ENCODE measurements at regions of chr17 and their contacts with region 1.

Region 1: GRCh38 chr17:78176548-78177025 is 8.2 kb downstream of the SYNGR2 start:
- DNase-seq: peak; percentile 59 to 88 (median 75)
- ATAC-seq: peak; percentile 86
- H3K4me3 ChIP-seq: no peak overlapping the region
- H3K4me3 Mint-ChIP-seq: no peak overlapping the region
- H3K27ac ChIP-seq: no peak overlapping the region
- H3K27ac Mint-ChIP-seq: no peak overlapping the region
- H3K4me1 ChIP-seq: peaks cover 53% of the 10 kb centered on the region
- H3K4me1 Mint-ChIP-seq: peaks cover 45% of the 10 kb centered on the region
- H3K27me3 ChIP-seq: no peaks in the 10 kb centered on the region
- H3K27me3 Mint-ChIP-seq: no peaks in the 10 kb centered on the region
- CTCF ChIP-seq: peak; percentile 87

Region 2: GRCh38 chr17:78019367-78019975 is 157.1 kb before region 1 on chr17:
- CTCF ChIA-PET with region 1: no interaction called
- POLR2A ChIA-PET with region 1: no interaction called
- intact Hi-C with region 1: loop called in 1 of 2 experiments (anchors 1 kb)
- DNase-seq: peak in 3 of 14 experiments; percentile 51 to 57 (median 55)
- ATAC-seq: no peak
- H3K4me3 ChIP-seq: no peak overlapping the region
- H3K4me3 Mint-ChIP-seq: no peak overlapping the region
- H3K27ac ChIP-seq: no peak overlapping the region
- H3K27ac Mint-ChIP-seq: no peak overlapping the region
- H3K4me1 ChIP-seq: peaks cover 15% of the 10 kb centered on the region
- H3K4me1 Mint-ChIP-seq: peaks cover 25% of the 10 kb centered on the region
- H3K27me3 ChIP-seq: no peaks in the 10 kb centered on the region
- H3K27me3 Mint-ChIP-seq: no peaks in the 10 kb centered on the region
- CTCF ChIP-seq: peak; percentile 72

Region 3: DNA sequence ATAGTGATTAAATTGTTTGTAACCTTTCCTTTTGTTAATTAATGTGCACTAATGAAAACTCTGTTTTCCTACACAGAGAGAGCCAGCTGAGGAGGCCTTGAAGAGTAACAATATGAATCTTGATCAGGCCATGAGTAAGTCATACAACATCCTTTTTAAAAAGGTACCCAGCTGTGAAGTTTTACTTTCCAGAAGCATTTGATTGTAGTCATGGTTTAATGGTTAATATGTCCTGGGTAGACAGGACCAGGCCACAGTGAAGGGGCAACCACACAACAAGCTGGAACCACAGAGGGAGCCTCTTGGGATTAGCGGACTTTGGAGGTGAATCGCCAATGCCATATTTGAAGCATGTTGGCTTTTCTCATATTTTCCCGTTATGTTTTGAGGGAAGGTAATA is 103.6 kb before region 1 on chr17:
- CTCF ChIA-PET with region 1: no interaction called
- POLR2A ChIA-PET with region 1: no interaction called
- intact Hi-C with region 1: no loop called
- DNase-seq: no peak
- ATAC-seq: no peak
- H3K4me3 ChIP-seq: no peak overlapping the region
- H3K4me3 Mint-ChIP-seq: no peak overlapping the region
- H3K27ac ChIP-seq: no peak overlapping the region
- H3K27ac Mint-ChIP-seq: no peak overlapping the region
- H3K4me1 ChIP-seq: no peaks in the 10 kb centered on the region
- H3K4me1 Mint-ChIP-seq: no peaks in the 10 kb centered on the region
- H3K27me3 ChIP-seq: no peaks in the 10 kb centered on the region
- H3K27me3 Mint-ChIP-seq: no peaks in the 10 kb centered on the region
- CTCF ChIP-seq: no peak

Region 4: GRCh38 chr17:78082988-78083387 is 93.6 kb before region 1 on chr17:
- CTCF ChIA-PET with region 1: interaction called, 11 read pairs
- POLR2A ChIA-PET with region 1: interaction called, 8 read pairs
- intact Hi-C with region 1: loop called (anchors 1 kb)
- DNase-seq: no peak
- ATAC-seq: no peak
- H3K4me3 ChIP-seq: no peak overlapping the region
- H3K4me3 Mint-ChIP-seq: no peak overlapping the region
- H3K27ac ChIP-seq: no peak overlapping the region
- H3K27ac Mint-ChIP-seq: no peak overlapping the region
- H3K4me1 ChIP-seq: no peaks in the 10 kb centered on the region
- H3K4me1 Mint-ChIP-seq: no peaks in the 10 kb centered on the region
- H3K27me3 ChIP-seq: no peaks in the 10 kb centered on the region
- H3K27me3 Mint-ChIP-seq: no peaks in the 10 kb centered on the region
- CTCF ChIP-seq: no peak

Region 5: GRCh38 chr17:78112518-78113226 is 63.9 kb before region 1 on chr17:
- CTCF ChIA-PET with region 1: interaction called, 14 read pairs
- POLR2A ChIA-PET with region 1: interaction called, 19 read pairs
- intact Hi-C with region 1: loop called (anchors 1 kb)
- DNase-seq: peak; percentile 55 to 87 (median 77)
- ATAC-seq: peak; percentile 73
- H3K4me3 ChIP-seq: no peak overlapping the region
- H3K4me3 Mint-ChIP-seq: no peak overlapping the region
- H3K27ac ChIP-seq: peak overlapping the region; percentile 7 to 46
- H3K27ac Mint-ChIP-seq: peak overlapping the region; percentile 84
- H3K4me1 ChIP-seq: peaks cover 72% of the 10 kb centered on the region
- H3K4me1 Mint-ChIP-seq: peaks cover 36% of the 10 kb centered on the region
- H3K27me3 ChIP-seq: no peaks in the 10 kb centered on the region
- H3K27me3 Mint-ChIP-seq: no peaks in the 10 kb centered on the region
- CTCF ChIP-seq: peak; percentile 100

Region 6: GRCh38 chr17:78128551-78129350 is 47.8 kb before region 1 on chr17 and contains the start of gene TMC6:
- CTCF ChIA-PET with region 1: interaction called, 49 read pairs
- POLR2A ChIA-PET with region 1: interaction called, 16 read pairs
- intact Hi-C with region 1: loop called in 1 of 2 experiments (anchors 5 kb)
- DNase-seq: peak; percentile 58 to 89 (median 75)
- ATAC-seq: peak; percentile 43
- H3K4me3 ChIP-seq: peak within 1 kb of the TSS; percentile 94
- H3K4me3 Mint-ChIP-seq: peak within 1 kb of the TSS; percentile 100
- H3K27ac ChIP-seq: peak within 1 kb of the TSS; percentile 75 to 92
- H3K27ac Mint-ChIP-seq: peak within 1 kb of the TSS; percentile 96
- H3K4me1 ChIP-seq: peaks cover 76% of the 10 kb centered on the region
- H3K4me1 Mint-ChIP-seq: peaks cover 56% of the 10 kb centered on the region
- H3K27me3 ChIP-seq: no peaks in the 10 kb centered on the region
- H3K27me3 Mint-ChIP-seq: no peaks in the 10 kb centered on the region
- CTCF ChIP-seq: no peak
- total RNA-seq, gene TMC6: 645 to 659 TPM

Region 7: DNA sequence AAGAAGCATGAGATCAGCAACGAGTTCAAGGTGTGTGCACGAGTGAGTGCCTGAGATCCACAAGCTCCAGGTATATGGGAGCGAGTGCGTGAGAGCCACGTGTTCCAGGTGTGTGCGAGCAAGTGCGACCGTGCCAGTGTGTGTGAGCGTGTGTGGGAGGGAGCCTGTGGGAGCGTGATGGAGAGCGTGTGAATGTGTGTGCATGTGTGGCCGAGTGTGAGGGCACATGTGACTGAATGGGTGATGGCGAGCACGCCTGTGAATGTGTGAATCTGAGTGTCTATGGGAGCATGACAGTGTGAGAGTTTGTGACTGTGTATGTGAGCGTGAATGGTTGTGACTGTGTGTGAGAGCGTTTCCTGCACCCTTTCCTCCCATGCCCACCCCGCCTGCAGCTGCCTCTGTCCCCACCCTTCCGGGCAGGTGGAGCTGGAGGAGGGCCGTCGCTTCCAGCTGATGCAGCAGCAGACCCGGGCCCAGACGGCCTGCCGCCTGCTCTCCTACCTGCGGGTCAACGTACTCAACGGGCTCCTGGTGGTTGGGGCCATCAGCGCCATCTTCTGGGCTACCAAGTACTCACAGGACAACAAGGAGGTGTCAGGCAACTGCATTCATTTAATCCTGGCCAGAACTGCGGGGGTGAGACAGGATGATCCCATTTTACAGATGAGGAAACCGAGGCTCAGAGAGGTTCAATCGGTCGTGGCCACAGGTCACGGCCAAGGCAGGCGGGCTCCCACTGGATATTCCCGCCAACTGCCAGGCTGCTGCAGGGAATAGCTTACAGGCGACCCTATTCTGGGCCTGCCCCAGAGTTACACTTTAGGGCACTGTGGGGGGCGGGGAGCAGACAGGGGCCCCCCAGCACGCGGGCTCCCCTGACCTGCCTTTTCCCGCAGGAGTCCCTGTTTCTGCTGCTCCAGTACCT is 42.4 kb before region 1 on chr17:
- CTCF ChIA-PET with region 1: interaction called, 49 read pairs
- POLR2A ChIA-PET with region 1: interaction called, 32 read pairs
- intact Hi-C with region 1: loop called (anchors 2 to 5 kb)
- DNase-seq: peak; percentile 71 to 93 (median 78)
- ATAC-seq: peak; percentile 34
- H3K4me3 ChIP-seq: peak overlapping the region; percentile 94
- H3K4me3 Mint-ChIP-seq: peak overlapping the region; percentile 88
- H3K27ac ChIP-seq: peak overlapping the region; percentile 7 to 92
- H3K27ac Mint-ChIP-seq: peak overlapping the region; percentile 81
- H3K4me1 ChIP-seq: peaks cover 90% of the 10 kb centered on the region
- H3K4me1 Mint-ChIP-seq: peaks cover 80% of the 10 kb centered on the region
- H3K27me3 ChIP-seq: no peaks in the 10 kb centered on the region
- H3K27me3 Mint-ChIP-seq: no peaks in the 10 kb centered on the region
- CTCF ChIP-seq: peak; percentile 75

Region 8: DNA sequence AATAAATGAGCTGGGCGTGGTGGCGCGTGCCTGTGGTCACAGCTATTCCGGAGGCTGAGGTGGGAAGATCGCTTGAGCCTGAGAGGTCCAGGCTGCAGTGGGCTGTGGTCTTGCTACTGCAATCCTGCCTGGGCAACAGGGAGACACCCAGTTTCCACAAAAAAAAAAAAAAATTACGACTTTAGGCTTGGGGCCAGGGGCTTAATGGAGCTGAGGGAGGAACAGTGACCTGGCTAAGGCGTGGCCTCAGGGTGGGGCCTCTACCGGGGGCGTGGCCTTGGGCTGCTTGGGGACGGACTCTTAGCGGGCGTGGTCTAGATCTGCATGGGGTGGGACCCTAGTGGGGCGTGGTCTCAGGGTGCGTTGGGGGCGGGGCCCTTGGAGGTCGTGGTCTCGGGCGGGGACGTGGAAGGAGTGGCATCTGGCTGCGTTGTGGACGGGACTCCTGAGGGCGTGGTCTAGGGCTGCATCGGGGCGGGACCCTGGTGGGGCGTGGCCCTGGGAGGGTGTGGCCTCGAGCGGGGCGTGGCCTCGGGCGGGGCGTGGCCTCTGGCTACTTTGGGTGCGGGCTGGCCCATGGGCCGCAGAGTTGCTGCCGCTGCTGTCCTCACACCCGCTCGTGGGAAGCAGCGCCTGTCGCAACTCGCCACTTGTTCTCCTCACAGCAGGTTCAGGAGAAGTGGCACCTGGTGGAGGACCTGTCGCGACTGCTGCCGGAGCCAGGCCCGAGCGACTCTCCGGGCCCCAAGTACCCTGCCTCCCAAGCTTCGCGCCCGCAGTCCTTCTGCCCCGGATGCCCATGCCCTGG is 36.2 kb before region 1 on chr17:
- CTCF ChIA-PET with region 1: interaction called, 49 read pairs
- POLR2A ChIA-PET with region 1: interaction called, 32 read pairs
- intact Hi-C with region 1: loop called in 1 of 2 experiments (anchors 2 kb)
- DNase-seq: peak; percentile 84 to 97 (median 92)
- ATAC-seq: peak; percentile 85
- H3K4me3 ChIP-seq: no peak overlapping the region
- H3K4me3 Mint-ChIP-seq: peak overlapping the region; percentile 77
- H3K27ac ChIP-seq: peak overlapping the region in 1 of 2 donors; percentile 38
- H3K27ac Mint-ChIP-seq: peak overlapping the region; percentile 91
- H3K4me1 ChIP-seq: peaks cover 95% of the 10 kb centered on the region
- H3K4me1 Mint-ChIP-seq: peaks cover 73% of the 10 kb centered on the region
- H3K27me3 ChIP-seq: no peaks in the 10 kb centered on the region
- H3K27me3 Mint-ChIP-seq: no peaks in the 10 kb centered on the region
- CTCF ChIP-seq: no peak

Region 9: DNA sequence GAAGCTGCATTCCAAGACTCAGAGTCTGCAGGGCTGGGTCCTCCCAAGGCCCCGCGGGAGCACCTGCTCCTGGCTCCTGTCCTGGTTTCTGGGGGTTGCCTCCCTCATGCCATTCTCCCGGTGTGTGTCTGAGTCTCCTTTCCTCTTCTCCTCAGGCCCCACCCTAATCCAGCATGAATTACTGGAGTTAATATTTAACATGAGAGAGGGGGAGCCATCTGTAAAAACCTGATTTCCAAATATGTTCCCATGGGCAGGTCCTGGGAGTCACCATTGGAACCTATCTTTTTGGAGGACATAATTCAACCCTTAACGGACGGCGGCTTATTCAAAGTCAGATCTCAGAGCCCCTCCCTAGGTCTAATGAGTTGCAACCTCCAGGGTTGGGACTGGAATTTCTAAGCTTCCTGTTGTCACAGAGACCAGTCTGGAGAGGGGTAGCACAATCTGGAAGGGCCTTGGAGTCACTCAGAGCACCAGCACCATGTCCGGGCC is 25.0 kb before region 1 on chr17:
- CTCF ChIA-PET with region 1: no interaction called
- POLR2A ChIA-PET with region 1: no interaction called
- intact Hi-C with region 1: no loop called
- DNase-seq: no peak
- ATAC-seq: no peak
- H3K4me3 ChIP-seq: no peak overlapping the region
- H3K4me3 Mint-ChIP-seq: no peak overlapping the region
- H3K27ac ChIP-seq: no peak overlapping the region
- H3K27ac Mint-ChIP-seq: no peak overlapping the region
- H3K4me1 ChIP-seq: peaks cover 23% of the 10 kb centered on the region
- H3K4me1 Mint-ChIP-seq: peaks cover 14% of the 10 kb centered on the region
- H3K27me3 ChIP-seq: no peaks in the 10 kb centered on the region
- H3K27me3 Mint-ChIP-seq: no peaks in the 10 kb centered on the region
- CTCF ChIP-seq: no peak